Activated B cell treated with CpG ODN at 0.5 μM for 24 hours (primary cell): ENCODE measurements at regions of chr11 and their contacts with region 1.

Region 1: DNA sequence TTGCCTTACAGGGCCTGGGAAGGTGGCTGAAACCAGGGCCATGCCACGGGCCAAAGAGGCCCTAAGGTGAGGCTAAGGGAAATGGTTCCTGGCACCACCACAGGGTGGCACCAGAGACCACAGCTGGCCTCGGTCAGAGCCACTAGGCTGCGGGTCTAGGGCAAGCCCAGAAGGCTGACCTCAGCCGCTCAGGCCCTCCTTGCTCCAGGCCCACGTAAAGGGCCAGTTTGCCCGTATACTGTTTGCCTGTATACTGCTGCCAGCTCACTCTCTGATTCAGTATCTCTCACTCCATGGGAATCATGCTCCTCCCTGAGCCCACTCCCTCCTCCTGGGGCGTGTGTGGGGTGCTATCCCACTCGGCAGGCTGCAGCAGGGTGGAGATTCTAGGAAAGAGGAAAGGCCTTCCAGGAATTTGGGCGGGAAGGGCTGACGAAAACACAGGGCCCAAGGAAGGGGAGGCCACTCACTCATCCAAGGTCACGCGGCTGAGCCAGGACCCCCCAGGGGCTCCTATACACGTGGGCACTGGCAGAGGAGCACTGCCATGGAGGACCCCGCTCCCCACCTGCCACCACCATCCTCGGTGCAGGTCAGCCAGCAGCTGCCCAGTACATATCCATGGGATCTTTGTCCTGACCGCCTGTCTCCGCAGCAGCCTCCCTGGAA is 62.4 kb downstream of the NECTIN1 start:
- DNase-seq: peak; percentile 61
- ATAC-seq: peak; percentile 95
- H3K4me3 Mint-ChIP-seq: no peak overlapping the region
- H3K27ac Mint-ChIP-seq: no peak overlapping the region
- H3K4me1 Mint-ChIP-seq: no peaks in the 10 kb centered on the region
- H3K27me3 Mint-ChIP-seq: no peaks in the 10 kb centered on the region
- CTCF ChIP-seq: no peak

Region 2: GRCh38 chr11:119533921-119534736 is 132.5 kb before region 1 on chr11:
- CTCF ChIA-PET with region 1: no interaction called
- POLR2A ChIA-PET with region 1: no interaction called
- intact Hi-C with region 1: no loop called
- DNase-seq: peak; percentile 57
- ATAC-seq: peak; percentile 79
- H3K4me3 Mint-ChIP-seq: no peak overlapping the region
- H3K27ac Mint-ChIP-seq: no peak overlapping the region
- H3K4me1 Mint-ChIP-seq: no peaks in the 10 kb centered on the region
- H3K27me3 Mint-ChIP-seq: peaks cover 37% of the 10 kb centered on the region
- CTCF ChIP-seq: peak; percentile 61

Region 3: GRCh38 chr11:119584193-119585037 is 82.2 kb before region 1 on chr11:
- CTCF ChIA-PET with region 1: no interaction called
- POLR2A ChIA-PET with region 1: no interaction called
- intact Hi-C with region 1: no loop called
- DNase-seq: no peak
- ATAC-seq: no peak
- H3K4me3 Mint-ChIP-seq: peak overlapping the region; percentile 41
- H3K27ac Mint-ChIP-seq: no peak overlapping the region
- H3K4me1 Mint-ChIP-seq: peaks cover 13% of the 10 kb centered on the region
- H3K27me3 Mint-ChIP-seq: peaks cover 39% of the 10 kb centered on the region
- CTCF ChIP-seq: no peak

Region 4: GRCh38 chr11:119615003-119615881 is 51.4 kb before region 1 on chr11:
- CTCF ChIA-PET with region 1: no interaction called
- POLR2A ChIA-PET with region 1: no interaction called
- intact Hi-C with region 1: no loop called
- DNase-seq: no peak
- ATAC-seq: no peak
- H3K4me3 Mint-ChIP-seq: no peak overlapping the region
- H3K27ac Mint-ChIP-seq: no peak overlapping the region
- H3K4me1 Mint-ChIP-seq: peaks cover 3% of the 10 kb centered on the region
- H3K27me3 Mint-ChIP-seq: no peaks in the 10 kb centered on the region
- CTCF ChIP-seq: no peak

Region 5: DNA sequence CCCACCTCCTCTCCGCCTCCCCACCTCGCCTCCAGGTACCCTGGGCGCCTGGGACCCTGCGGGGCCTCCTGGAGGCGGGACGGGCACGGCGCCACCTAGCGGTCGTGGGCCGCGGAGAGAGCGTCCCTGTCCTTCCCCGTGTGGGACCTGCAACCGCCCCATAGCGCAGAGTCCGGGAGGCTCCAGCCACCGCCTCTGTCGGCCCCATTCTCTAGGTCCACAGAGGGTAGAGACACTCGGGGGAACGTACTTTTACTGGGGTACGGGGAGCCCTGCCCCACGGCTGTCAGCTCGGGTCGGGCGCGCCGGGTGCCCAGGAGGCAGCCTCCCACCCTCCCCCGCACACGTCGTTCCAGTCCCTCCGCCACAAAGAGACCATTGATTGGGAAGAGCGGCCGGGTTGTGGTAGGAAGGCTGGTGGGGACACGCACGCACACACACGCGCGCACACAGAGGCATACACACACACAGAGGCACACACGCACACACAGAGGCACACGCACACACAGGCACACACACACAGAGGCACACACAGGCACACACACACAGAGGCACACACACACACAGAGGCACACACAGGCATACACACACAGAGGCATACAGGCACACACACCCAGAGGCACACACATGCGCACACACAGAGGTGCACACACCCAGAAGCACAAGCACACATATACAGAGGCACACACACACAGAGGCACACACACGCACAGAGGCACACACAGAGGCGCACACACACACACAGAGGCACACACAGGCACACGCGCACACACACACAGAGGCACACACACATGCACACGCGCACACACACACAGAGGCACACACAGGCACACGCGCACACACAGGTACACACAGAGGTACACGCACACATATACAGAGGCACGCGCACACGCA is 75.0 kb after region 1 on chr11:
- CTCF ChIA-PET with region 1: no interaction called
- POLR2A ChIA-PET with region 1: no interaction called
- intact Hi-C with region 1: loop called (anchors 1 kb)
- DNase-seq: peak; percentile 67
- ATAC-seq: peak; percentile 88
- H3K4me3 Mint-ChIP-seq: peak overlapping the region; percentile 25
- H3K27ac Mint-ChIP-seq: no peak overlapping the region
- H3K4me1 Mint-ChIP-seq: peaks cover 10% of the 10 kb centered on the region
- H3K27me3 Mint-ChIP-seq: peaks cover 51% of the 10 kb centered on the region
- CTCF ChIP-seq: no peak

Region 6: DNA sequence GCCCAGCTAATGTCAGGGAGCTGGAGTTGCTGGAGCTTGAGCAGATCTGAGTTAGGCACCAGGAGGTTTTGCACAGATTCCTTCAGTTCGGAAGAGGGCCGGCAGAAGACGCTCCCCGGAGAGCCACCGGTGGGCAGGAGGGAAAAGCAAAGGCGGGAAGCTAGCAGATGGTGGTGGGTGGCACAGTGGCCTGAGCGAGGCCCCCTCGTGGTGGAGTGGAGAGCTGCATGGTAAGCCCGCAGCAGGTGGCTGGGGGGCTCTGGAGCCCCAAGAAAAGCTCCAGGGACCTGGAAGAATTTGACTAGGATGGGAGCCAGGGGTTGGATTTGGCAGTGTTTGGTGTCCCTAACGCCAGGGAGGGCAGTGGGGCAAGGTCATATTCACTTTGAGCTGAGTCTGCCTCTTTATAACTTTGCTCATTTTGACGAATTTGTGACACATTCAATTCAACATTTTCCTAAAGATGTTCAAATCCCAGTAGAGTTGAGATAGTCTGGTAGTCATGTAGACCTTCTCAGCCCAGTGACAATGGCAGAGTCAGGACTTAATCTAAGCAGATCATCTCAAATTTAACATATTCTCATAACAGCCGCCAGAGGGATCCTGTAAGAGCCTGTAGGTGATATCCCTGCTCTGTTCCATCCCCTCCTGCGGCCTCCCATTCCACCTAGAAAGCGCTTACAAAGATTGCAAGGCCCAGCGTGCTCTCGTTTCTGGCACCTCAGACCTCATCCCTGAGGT is 413.3 kb after region 1 on chr11:
- CTCF ChIA-PET with region 1: interaction called, 9 read pairs
- POLR2A ChIA-PET with region 1: interaction called, 3 read pairs
- intact Hi-C with region 1: loop called (anchors 1 kb)
- DNase-seq: no peak
- ATAC-seq: peak; percentile 45
- H3K4me3 Mint-ChIP-seq: no peak overlapping the region
- H3K27ac Mint-ChIP-seq: no peak overlapping the region
- H3K4me1 Mint-ChIP-seq: no peaks in the 10 kb centered on the region
- H3K27me3 Mint-ChIP-seq: peaks cover 15% of the 10 kb centered on the region
- CTCF ChIP-seq: no peak

Region 7: GRCh38 chr11:120172054-120172911 is 505.7 kb after region 1 on chr11:
- CTCF ChIA-PET with region 1: no interaction called
- POLR2A ChIA-PET with region 1: no interaction called
- intact Hi-C with region 1: loop called (anchors 2 kb)
- DNase-seq: peak; percentile 10
- ATAC-seq: peak; percentile 54
- H3K4me3 Mint-ChIP-seq: no peak overlapping the region
- H3K27ac Mint-ChIP-seq: no peak overlapping the region
- H3K4me1 Mint-ChIP-seq: peaks cover 12% of the 10 kb centered on the region
- H3K27me3 Mint-ChIP-seq: peaks cover 61% of the 10 kb centered on the region
- CTCF ChIP-seq: no peak